HEK293T (cell line): ENCODE measurements at regions of chr6 and their contacts with region 1.

Region 1: GRCh38 chr6:139109558-139109957 is 25.3 kb upstream of the HECA start:
- DNase-seq: no peak

Region 2: DNA sequence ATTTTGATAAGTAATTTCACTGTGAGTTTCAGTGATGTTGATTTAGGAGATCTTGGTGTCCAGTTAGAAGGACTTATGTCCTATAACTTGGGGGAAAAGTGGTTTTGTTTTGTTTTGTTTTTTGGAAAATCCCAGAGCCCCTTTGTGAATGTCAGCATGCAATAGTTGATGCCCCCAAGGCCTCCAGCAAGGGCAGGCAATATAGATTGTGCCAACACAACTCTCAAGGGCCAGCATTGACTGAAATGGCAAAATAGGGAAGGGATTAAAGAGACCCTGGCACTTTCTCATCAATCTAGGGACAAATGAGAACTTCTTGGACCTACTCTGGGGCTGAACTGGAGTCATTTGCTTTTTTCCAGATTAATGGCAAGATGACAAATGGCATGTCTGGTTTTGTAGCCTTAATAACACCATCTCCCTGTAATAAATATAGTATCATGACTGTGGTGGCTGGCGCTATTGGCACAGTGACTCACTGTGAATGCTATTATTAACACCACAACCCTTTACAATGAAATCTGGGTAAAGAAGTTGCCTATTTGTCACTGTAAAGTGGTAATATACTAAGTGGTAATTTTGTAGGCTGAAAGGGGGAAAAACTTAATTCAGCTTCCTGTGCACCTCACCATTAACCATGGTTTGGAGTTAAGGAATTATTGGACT is 29.2 kb before region 1 on chr6:
- CTCF ChIA-PET with region 1: no interaction called
- POLR2A ChIA-PET with region 1: no interaction called
- DNase-seq: no peak

Region 3: GRCh38 chr6:139091826-139092225 is 17.7 kb before region 1 on chr6:
- CTCF ChIA-PET with region 1: interaction called, 10 read pairs
- POLR2A ChIA-PET with region 1: no interaction called
- DNase-seq: no peak

Region 4: DNA sequence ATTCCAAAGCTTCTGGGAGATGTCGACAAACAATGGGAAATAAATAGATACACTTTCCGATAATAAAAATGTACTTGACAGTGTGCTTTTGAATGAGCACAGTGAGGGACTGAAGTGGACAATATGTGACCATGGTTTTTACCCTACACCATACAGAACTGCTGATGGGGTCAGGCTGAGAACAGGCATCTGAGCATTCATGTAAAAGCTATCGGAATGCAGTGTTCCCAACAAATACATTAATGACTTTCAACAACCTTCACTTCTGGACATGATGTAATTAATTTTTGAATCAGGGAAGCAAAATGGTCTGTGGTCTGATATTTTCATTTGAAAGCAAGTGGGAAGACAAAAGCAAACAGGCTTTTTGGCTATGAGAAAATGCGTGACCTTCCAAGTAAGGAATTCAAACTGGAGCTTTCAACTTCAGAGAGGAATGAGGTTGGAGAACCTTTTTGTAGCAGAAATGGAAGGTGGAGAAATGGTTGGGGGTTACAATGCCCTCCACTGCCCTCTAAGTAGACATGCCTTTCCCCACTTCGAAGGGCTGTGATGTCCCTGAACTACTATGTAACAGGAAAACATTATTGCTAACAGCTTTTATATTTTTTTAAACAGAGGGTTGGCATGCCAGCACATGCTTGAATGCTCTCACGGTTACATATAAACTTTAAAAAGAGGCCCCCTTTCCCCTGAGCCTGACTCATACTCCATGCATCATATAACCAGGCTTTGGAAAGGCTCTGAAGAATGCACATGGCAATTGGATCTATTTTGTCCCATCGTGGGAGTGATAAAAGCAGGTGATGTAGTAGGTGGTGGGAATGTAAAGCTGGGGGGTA is 468.4 kb after region 1 on chr6:
- CTCF ChIA-PET with region 1: no interaction called
- POLR2A ChIA-PET with region 1: no interaction called
- DNase-seq: no peak